H1 (cell line): ENCODE measurements at regions of chr3 and their contacts with region 1.

Region 1: DNA sequence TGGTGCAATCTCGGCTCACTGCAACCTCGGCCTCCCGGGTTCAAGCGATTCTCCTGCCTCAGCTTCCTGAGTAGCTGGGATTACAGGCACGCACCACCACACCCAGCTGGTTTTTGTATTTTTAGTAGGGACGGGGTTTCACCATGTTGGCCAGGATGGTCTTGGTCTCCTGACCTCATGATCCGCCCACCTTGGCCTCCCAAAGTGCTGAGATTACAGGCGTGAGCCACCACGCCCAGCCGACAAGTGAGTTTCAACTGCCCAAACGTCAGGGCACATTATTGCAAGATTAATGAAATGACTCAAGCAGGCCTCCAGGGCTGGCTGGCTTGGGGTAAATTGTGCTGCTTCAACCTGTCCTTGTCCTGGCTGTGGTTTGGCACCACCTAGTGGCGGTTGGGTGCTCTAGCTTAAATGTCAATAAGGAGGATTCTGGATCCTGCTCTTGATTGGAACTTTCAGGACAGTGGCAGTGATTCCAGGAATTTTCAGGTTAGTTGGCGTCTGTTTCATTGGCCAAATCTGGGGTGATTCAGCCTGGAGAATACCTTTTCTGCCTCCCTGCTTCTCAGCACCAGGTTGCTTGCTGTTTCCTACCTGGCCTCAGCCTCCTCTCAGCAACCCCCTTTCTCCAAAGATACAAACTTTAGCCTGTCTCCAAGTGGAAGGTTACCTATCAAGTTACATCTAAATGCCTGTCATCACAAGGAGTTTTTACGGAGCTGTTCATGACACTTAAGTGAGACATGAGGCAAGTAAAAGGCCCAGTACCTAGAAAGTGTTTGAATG is 32.4 kb upstream of the SACM1L start:
- DNase-seq: peak; percentile 79 to 88
- H3K4me3 ChIP-seq: no peak overlapping the region
- H3K27ac ChIP-seq: no peak overlapping the region
- H3K4me1 ChIP-seq: no peaks in the 10 kb centered on the region
- H3K27me3 ChIP-seq: no peaks in the 10 kb centered on the region
- CTCF ChIP-seq: peak; percentile 86 to 99 (median 96)
- EP300 ChIP-seq: no peak
- POLR2A ChIP-seq: no peak
- RAD21 ChIP-seq: peak; percentile 95 to 98

Region 2: GRCh38 chr3:45507820-45508317 is 148.9 kb before region 1 on chr3:
- CTCF ChIA-PET with region 1: interaction called, 65 read pairs
- POLR2A ChIA-PET with region 1: interaction called, 3 read pairs
- DNase-seq: peak in 1 of 2 experiments; percentile 61
- H3K4me3 ChIP-seq: peak overlapping the region in 1 of 4 experiments; percentile 3; a peak in 1 of 8 replicates
- H3K27ac ChIP-seq: peak overlapping the region; percentile 37; the same call in 1 of the 2 replicates
- H3K4me1 ChIP-seq: peaks cover 11 to 32% (median 22%) of the 10 kb centered on the region in 4 experiments; a peak in 6 of 7 replicates
- H3K27me3 ChIP-seq: no peaks in the 10 kb centered on the region
- CTCF ChIP-seq: peak; percentile 39 to 55 (median 54)
- EP300 ChIP-seq: no peak
- POLR2A ChIP-seq: no peak
- RAD21 ChIP-seq: peak; percentile 22 to 47; a peak in 3 of 4 replicates

Region 3: DNA sequence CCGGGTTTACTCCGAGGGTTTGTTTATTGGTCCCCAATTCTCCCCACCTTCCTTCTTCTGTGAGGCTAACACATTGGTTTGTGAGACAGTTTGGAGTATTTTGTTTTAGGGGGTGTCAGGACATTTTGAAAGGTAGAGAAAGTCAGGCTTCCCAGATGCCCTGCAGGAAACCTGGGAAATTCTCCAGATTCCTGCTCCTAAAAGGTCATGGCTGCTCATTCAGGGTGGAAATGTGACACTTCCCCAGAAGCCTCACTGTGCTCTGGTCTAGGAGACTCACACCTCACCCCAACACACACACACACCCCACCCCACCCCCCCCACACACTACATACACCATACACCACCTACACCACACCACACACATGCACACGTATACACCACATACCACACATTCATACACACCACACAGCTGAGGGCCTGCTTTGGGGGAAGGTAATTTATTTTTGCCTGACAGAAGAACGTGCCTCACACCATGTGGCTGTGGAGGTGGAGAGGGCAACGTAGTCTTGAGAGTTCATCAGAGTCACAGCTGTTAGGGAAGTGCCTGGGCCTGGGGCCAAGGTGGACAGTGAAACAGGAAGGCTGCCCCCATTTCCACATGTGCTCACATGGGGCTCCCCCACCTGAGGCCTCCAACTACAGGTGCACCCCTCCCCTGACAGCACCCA is 102.6 kb before region 1 on chr3:
- CTCF ChIA-PET with region 1: interaction called, 15 read pairs
- POLR2A ChIA-PET with region 1: no interaction called
- DNase-seq: no peak
- H3K4me3 ChIP-seq: no peak overlapping the region
- H3K27ac ChIP-seq: no peak overlapping the region
- H3K4me1 ChIP-seq: peaks cover 0 to 7% (median 1%) of the 10 kb centered on the region in 4 experiments; a peak in 1 of 7 replicates
- H3K27me3 ChIP-seq: no peaks in the 10 kb centered on the region
- CTCF ChIP-seq: no peak
- EP300 ChIP-seq: no peak
- POLR2A ChIP-seq: no peak
- RAD21 ChIP-seq: no peak

Region 4: GRCh38 chr3:45607790-45608189 is 49.0 kb before region 1 on chr3:
- CTCF ChIA-PET with region 1: interaction called, 17 read pairs
- POLR2A ChIA-PET with region 1: no interaction called
- DNase-seq: no peak
- H3K4me3 ChIP-seq: no peak overlapping the region
- H3K27ac ChIP-seq: no peak overlapping the region
- H3K4me1 ChIP-seq: peaks cover 0 to 5% (median 1%) of the 10 kb centered on the region in 4 experiments; a peak in 4 of 7 replicates
- H3K27me3 ChIP-seq: no peaks in the 10 kb centered on the region
- CTCF ChIP-seq: no peak
- EP300 ChIP-seq: no peak
- POLR2A ChIP-seq: no peak
- RAD21 ChIP-seq: no peak

Region 5: GRCh38 chr3:45670991-45671390 is 14.2 kb after region 1 on chr3:
- CTCF ChIA-PET with region 1: interaction called, 36 read pairs
- POLR2A ChIA-PET with region 1: interaction called, 5 read pairs
- DNase-seq: no peak
- H3K4me3 ChIP-seq: no peak overlapping the region
- H3K27ac ChIP-seq: no peak overlapping the region
- H3K4me1 ChIP-seq: peaks cover 0 to 10% (median 3%) of the 10 kb centered on the region in 4 experiments; a peak in 4 of 7 replicates
- H3K27me3 ChIP-seq: no peaks in the 10 kb centered on the region
- CTCF ChIP-seq: no peak
- EP300 ChIP-seq: no peak
- POLR2A ChIP-seq: no peak
- RAD21 ChIP-seq: peak in 1 of 2 experiments; percentile 9; a peak in 1 of 4 replicates

Region 6: DNA sequence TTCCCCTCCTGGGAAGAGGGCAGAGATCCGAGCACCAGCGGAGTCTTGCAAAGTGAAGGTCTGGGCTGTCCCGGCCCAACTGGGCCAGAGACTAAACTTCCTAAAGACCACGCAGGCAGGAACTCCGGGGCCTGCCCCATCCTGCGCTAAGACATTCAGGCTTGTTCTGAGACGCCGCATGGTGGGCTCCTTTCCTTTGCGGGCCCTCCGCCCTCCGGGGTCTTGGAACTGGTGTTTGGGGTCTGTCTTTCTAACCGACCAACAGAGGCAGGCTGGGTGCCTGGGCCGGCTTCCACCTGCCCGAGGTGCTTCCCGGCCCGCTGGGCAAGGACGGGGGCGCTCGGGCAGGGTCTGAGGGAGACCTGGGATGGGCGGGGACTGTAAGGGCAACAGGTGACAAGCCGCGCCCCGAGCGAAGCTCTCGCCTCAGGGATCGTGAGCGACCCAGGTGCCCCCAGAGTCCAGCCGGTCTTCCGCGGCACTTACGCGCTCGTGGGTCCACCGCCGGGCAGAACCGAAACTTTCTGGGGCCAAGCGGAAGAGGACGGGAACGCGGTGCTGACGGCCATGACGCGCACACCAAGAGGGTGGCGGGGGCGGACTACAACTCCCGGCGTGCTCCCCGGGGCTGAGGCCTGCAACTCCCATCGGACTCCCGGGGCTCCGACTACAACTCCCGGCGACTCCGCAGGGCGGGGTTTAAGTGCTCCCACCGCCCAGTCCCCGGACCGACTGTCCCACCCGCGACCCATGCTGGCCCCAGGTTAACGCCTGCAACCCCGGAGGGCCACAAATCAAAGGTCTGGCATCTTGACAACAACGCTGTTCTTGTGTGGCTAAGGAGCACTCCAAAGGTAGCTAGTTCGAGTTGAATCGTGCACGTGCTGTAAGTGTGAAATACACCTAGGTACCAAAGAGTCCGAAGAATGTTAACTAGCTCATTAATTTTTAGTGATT is 338.7 kb after region 1 on chr3 and contains the start of gene FYCO1:
- CTCF ChIA-PET with region 1: no interaction called
- POLR2A ChIA-PET with region 1: no interaction called
- DNase-seq: peak; percentile 65 to 92
- H3K4me3 ChIP-seq: peak within 1 kb of the TSS; percentile 75 to 98 (median 84)
- H3K27ac ChIP-seq: peak within 1 kb of the TSS; percentile 12; the same call in 1 of the 2 replicates
- H3K4me1 ChIP-seq: peaks cover 5 to 15% (median 12%) of the 10 kb centered on the region in 4 experiments
- H3K27me3 ChIP-seq: peaks cover 0 to 7% (median 4%) of the 10 kb centered on the region in 4 experiments; a peak in 2 of 7 replicates
- CTCF ChIP-seq: no peak
- EP300 ChIP-seq: no peak
- POLR2A ChIP-seq: peak in 1 of 2 experiments; percentile 46; a peak in 1 of 3 replicates
- RAD21 ChIP-seq: no peak
- total RNA-seq, gene FYCO1: 9.3 and 10.8 TPM in 2 replicates